ENCODE measurements at regions of chr19 and their contacts with region 1.

Region 1: DNA sequence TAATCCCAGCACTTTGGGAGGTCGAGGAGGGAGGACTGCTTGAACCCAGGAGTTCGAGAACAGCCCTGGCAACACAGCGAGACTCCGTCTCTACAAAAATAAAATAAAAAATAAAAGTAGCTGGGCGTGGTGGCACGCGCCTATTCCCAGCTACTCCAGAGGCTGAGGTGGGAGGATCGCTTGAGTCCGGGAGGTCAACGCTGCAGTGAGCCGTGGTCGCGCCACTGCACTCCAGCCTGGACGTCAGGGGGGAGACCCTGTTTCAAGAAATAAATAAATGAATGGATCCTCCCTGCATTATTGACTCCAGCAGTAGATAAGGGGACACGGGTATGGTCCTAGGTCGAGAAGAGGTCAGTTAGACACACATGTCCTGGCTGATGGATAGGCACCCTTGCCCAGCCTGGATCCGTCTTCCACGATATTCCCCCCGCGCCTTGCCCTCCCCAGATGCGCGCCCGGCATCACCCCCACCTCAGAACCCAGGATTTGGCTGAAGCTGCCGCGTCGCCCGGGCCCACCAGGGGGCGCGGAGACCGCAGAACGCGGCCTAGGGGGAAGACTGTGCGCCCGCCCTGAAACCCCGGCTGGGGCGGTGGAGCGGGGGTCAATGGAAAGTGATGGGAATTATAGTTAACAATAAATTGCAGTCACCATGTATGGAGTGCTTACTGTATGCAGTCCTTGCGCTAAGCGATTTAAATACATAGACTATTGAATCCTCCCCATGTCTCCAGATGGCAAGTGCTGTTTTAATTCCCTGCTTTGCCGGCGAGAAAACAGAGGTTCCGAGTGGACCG is 2.1 kb upstream of the HOOK2 start:
- DNase-seq: no peak
- ATAC-seq: peak; percentile 73
- H3K4me3 ChIP-seq: peak overlapping the region; percentile 53 to 81
- H3K27ac ChIP-seq: peak overlapping the region; percentile 87
- H3K4me1 ChIP-seq: peaks cover 16% of the 10 kb centered on the region
- H3K27me3 ChIP-seq: no peaks in the 10 kb centered on the region
- CTCF ChIP-seq: peak; percentile 94

Region 2: GRCh38 chr19:12716861-12717260 is 60.6 kb before region 1 on chr19:
- CTCF ChIA-PET with region 1: no interaction called
- POLR2A ChIA-PET with region 1: no interaction called
- in situ Hi-C with region 1: no loop called
- intact Hi-C with region 1: no loop called
- DNase-seq: no peak
- ATAC-seq: peak; percentile 77
- H3K4me3 ChIP-seq: no peak overlapping the region
- H3K27ac ChIP-seq: no peak overlapping the region
- H3K4me1 ChIP-seq: peaks cover 5% of the 10 kb centered on the region
- H3K27me3 ChIP-seq: no peaks in the 10 kb centered on the region
- CTCF ChIP-seq: no peak; the same call in 1 of the 2 replicates

Region 3: DNA sequence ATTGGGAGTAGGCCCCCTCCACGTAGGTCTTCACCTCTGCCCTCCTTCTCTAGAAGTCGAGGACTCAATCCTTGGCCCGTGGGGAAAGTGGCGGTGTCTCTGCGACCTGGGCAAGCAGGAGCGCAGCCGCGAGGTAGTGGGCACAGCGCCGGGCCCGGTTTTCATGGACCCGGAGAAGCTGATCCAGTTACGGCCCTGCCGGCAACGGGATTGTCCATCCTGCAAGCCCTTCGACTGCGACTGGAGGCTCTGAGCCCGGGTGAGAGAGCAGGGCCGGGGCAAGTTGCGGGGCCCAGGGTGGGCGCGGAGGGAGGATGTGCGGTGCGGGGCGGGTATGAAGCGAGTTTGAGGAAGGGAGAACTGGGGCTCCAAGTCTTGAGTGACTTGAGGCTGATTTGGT is 26.6 kb after region 1 on chr19:
- CTCF ChIA-PET with region 1: no interaction called
- POLR2A ChIA-PET with region 1: interaction called, 19 read pairs
- in situ Hi-C with region 1: no loop called
- intact Hi-C with region 1: no loop called
- DNase-seq: no peak
- ATAC-seq: no peak
- H3K4me3 ChIP-seq: no peak overlapping the region
- H3K27ac ChIP-seq: no peak overlapping the region
- H3K4me1 ChIP-seq: peaks cover 8% of the 10 kb centered on the region
- H3K27me3 ChIP-seq: no peaks in the 10 kb centered on the region
- CTCF ChIP-seq: no peak

Region 4: DNA sequence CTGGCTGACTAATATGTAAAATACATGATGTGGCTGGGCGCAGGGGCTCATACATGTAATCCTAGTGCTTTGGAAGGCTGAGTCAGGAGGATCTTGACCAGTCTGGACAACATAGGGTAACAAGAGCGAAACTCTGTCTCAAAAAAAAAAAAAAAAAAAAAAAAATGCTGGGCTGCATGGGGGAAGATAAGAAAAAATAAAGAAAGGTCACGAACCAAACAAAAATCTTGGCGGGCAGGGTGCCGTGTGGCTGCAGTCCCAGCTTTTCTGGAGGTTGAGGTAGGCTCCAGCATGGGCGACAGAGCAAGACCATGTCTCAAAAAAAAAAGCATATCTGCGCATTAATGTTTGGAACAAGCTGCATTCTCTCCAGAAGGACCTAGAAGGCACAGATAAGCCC is 37.7 kb after region 1 on chr19:
- CTCF ChIA-PET with region 1: no interaction called
- POLR2A ChIA-PET with region 1: no interaction called
- in situ Hi-C with region 1: no loop called
- intact Hi-C with region 1: no loop called
- DNase-seq: no peak
- ATAC-seq: no peak
- H3K4me3 ChIP-seq: no peak overlapping the region
- H3K27ac ChIP-seq: no peak overlapping the region
- H3K4me1 ChIP-seq: no peaks in the 10 kb centered on the region
- H3K27me3 ChIP-seq: no peaks in the 10 kb centered on the region
- CTCF ChIP-seq: no peak